ENCODE measurements at regions of chr1 and their contacts with region 1.

Region 1: DNA sequence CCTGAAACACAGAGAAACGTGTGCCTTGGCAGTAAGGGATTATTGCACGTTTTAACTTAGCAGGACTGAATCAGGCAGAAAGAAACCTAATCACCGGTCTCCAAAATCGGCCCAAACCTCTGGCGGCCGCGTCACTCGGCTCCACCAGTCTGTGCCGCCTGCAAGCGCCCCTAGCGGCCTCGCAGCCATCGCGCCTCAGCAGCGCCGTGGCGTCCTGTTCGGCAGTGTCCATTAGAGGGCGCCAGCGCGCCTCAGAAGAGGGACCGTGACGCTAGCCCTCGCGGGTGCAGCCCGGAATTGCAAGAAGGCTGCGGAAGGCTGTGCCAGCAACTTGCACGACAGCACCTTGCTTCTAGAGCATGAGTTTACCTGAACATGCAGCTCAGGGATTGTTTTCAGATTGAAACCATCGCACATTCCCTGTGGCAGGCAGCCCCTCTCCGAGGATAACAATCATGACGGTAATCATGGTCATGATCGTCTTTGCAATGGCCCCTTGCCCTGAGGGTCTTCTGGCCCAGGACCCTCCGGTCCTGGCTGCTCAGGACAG is 164.4 kb downstream of the TRIM33 start:
- DNase-seq: peak; percentile 94 to 99 (median 97)
- ATAC-seq: peak; percentile 98
- H3K4me3 ChIP-seq: peak overlapping the region; percentile 43 to 47
- H3K4me3 Mint-ChIP-seq: peak overlapping the region; percentile 92
- H3K27ac ChIP-seq: peak overlapping the region in 1 of 2 experiments; percentile 41
- H3K27ac Mint-ChIP-seq: peak overlapping the region; percentile 94
- H3K4me1 ChIP-seq: peaks cover 30% of the 10 kb centered on the region
- H3K4me1 Mint-ChIP-seq: peaks cover 33% of the 10 kb centered on the region
- H3K27me3 ChIP-seq: no peaks in the 10 kb centered on the region
- H3K27me3 Mint-ChIP-seq: no peaks in the 10 kb centered on the region
- CTCF ChIP-seq: peak; percentile 100

Region 2: DNA sequence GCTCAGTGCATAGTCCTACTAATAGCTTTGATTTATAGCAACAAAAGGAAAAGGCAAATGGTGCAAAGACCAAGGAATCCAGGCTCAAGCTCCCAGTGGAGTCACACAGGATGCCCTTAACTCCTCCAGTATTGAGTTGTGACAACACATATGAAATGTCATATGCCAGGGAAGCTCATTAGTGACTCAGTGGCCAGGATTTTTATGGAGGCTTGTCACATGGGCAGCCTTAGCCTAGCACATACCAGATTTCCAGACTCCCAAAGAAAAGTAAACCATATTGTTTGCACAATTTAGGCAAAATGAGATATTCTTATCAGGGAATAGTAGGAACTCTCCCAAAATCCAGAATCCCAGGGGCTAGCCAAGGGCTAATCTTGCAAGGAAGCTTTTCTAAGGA is 827.0 kb before region 1 on chr1:
- CTCF ChIA-PET with region 1: no interaction called
- POLR2A ChIA-PET with region 1: no interaction called
- intact Hi-C with region 1: no loop called
- DNase-seq: no peak
- ATAC-seq: no peak
- H3K4me3 ChIP-seq: no peak overlapping the region
- H3K4me3 Mint-ChIP-seq: no peak overlapping the region
- H3K27ac ChIP-seq: no peak overlapping the region
- H3K27ac Mint-ChIP-seq: no peak overlapping the region
- H3K4me1 ChIP-seq: no peaks in the 10 kb centered on the region
- H3K4me1 Mint-ChIP-seq: no peaks in the 10 kb centered on the region
- H3K27me3 ChIP-seq: no peaks in the 10 kb centered on the region
- H3K27me3 Mint-ChIP-seq: peaks cover 9% of the 10 kb centered on the region
- CTCF ChIP-seq: no peak

Region 3: DNA sequence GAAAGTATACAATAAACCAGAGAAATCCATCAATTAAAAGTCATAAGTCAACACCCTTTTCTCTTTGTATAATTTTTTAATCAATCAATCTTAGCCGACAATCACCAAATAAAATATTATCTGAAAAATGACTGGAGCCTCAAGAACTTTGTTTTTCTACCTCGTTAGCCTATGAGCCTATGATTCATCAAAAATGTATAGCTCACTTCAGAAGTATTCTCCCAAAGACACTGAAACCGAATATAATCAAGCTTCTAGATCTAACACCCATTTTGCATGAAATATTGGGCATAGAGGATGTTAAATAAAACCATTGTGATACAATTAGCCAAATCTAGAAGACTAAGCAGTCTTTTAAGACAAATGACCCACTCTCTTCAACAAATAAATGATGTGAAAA is 516.5 kb before region 1 on chr1:
- CTCF ChIA-PET with region 1: interaction called, 4 read pairs
- POLR2A ChIA-PET with region 1: no interaction called
- intact Hi-C with region 1: loop called in 1 of 2 experiments (anchors 5 kb)
- DNase-seq: no peak
- ATAC-seq: no peak
- H3K4me3 ChIP-seq: no peak overlapping the region
- H3K4me3 Mint-ChIP-seq: no peak overlapping the region
- H3K27ac ChIP-seq: no peak overlapping the region
- H3K27ac Mint-ChIP-seq: no peak overlapping the region
- H3K4me1 ChIP-seq: no peaks in the 10 kb centered on the region
- H3K4me1 Mint-ChIP-seq: no peaks in the 10 kb centered on the region
- H3K27me3 ChIP-seq: no peaks in the 10 kb centered on the region
- H3K27me3 Mint-ChIP-seq: no peaks in the 10 kb centered on the region
- CTCF ChIP-seq: no peak

Region 4: GRCh38 chr1:114330451-114330983 is 16.0 kb before region 1 on chr1:
- CTCF ChIA-PET with region 1: interaction called, 51 read pairs
- POLR2A ChIA-PET with region 1: interaction called, 37 read pairs
- intact Hi-C with region 1: loop called (anchors 1 to 2 kb)
- DNase-seq: peak in 7 of 9 experiments; percentile 23 to 72 (median 48)
- ATAC-seq: peak; percentile 80
- H3K4me3 ChIP-seq: no peak overlapping the region
- H3K4me3 Mint-ChIP-seq: peak overlapping the region; percentile 6
- H3K27ac ChIP-seq: no peak overlapping the region
- H3K27ac Mint-ChIP-seq: peak overlapping the region; percentile 85
- H3K4me1 ChIP-seq: peaks cover 65% of the 10 kb centered on the region
- H3K4me1 Mint-ChIP-seq: peaks cover 76% of the 10 kb centered on the region
- H3K27me3 ChIP-seq: no peaks in the 10 kb centered on the region
- H3K27me3 Mint-ChIP-seq: no peaks in the 10 kb centered on the region
- CTCF ChIP-seq: no peak

Region 5: DNA sequence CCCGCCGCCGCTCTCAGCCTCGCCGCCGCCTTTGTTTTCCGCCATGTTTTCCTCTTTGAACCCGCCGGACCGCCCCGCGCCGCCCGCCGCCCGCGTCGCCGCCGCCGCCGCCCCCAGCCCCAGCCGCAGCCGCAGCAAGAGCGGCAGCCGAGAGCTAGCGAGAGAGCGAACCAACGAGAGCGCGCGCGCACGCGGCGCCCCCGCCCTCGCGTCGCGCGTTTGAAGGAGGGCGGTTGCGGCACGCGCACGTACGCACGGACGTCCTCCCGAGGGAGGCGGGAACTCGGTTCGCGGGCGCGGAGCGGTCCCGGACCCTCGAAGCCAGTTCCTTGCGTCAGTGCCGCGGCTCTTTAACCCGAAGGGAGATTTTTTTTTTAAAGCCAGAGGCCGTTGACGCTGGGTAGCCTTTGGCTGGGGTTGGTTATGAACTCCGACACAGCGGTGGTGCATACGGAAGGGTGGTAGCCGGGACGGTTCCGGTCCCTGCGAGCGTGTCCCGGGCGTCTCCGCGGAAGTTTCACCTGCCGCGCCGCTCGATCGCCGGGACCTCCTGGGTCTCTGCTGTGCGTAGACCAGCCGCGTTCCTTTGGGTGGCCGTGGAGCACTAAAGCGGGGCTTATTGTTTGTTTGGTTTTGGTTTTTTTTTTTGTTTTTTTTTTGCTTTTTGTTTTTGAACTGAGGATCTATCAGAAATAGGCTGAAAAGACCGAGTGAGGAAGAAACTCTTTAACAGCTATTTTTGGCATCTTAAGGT is 164.7 kb after region 1 on chr1 and contains the start of gene TRIM33:
- CTCF ChIA-PET with region 1: interaction called, 3 read pairs
- POLR2A ChIA-PET with region 1: interaction called, 4 read pairs
- intact Hi-C with region 1: loop called (anchors 1 to 5 kb)
- DNase-seq: peak; percentile 84 to 98 (median 91)
- ATAC-seq: peak; percentile 80
- H3K4me3 ChIP-seq: peak within 1 kb of the TSS; percentile 78 to 96
- H3K4me3 Mint-ChIP-seq: peak within 1 kb of the TSS; percentile 96
- H3K27ac ChIP-seq: peak within 1 kb of the TSS; percentile 93 to 100
- H3K27ac Mint-ChIP-seq: peak within 1 kb of the TSS; percentile 99
- H3K4me1 ChIP-seq: peaks cover 40% of the 10 kb centered on the region
- H3K4me1 Mint-ChIP-seq: peaks cover 54% of the 10 kb centered on the region
- H3K27me3 ChIP-seq: no peaks in the 10 kb centered on the region
- H3K27me3 Mint-ChIP-seq: no peaks in the 10 kb centered on the region
- CTCF ChIP-seq: no peak
- total RNA-seq, gene TRIM33: 50.4 to 50.7 TPM

Region 6: DNA sequence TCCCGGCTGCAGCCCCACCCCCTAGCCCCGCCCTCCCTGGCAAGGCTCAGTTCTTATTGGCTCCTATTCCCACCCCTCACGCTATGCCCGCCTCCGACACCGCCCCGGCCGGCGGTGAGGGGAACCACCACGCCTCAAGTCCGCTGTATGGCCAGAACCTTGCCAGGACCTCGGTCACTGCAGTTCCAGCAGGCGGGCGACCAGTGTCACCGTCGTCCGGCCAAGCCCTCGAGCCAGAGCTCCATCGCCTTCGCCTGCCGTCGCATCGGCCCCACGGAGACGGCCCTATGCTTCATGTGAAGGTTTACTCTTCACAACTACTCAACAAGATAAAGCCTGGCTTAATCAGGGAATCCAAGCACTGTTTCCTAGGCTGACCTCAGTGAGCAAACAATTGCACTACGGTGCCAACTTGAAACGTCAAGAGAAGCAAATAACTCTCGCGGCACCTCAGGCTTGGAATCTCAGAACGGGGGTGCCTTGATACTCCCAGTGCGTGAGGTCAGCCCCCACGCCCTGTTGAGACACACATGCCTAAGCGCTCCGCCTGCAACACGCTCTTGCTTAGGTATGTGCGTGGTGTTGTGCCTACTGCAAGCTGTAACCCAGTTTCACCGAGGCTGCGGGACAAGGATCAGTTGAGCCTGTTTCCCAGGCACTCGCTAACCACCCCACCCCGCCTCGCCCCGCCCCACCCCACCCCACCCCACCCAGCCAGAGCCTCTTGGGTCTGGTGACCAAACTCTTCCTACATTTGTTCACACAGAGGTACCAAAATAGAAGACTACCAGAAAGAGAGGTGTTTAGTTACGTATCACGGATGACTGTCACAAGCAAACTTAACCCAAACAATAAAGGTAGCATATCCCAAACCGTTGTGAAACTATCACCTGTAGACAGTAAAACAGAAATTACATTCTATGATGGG is 323.8 kb after region 1 on chr1:
- CTCF ChIA-PET with region 1: interaction called, 8 read pairs
- POLR2A ChIA-PET with region 1: no interaction called
- intact Hi-C with region 1: loop called (anchors 1 to 2 kb)
- DNase-seq: peak in 8 of 9 experiments; percentile 2 to 90 (median 86)
- ATAC-seq: peak; percentile 96
- H3K4me3 ChIP-seq: peak overlapping the region; percentile 77 to 79
- H3K4me3 Mint-ChIP-seq: peak overlapping the region; percentile 98
- H3K27ac ChIP-seq: peak overlapping the region in 1 of 2 experiments; percentile 49
- H3K27ac Mint-ChIP-seq: peak overlapping the region; percentile 92
- H3K4me1 ChIP-seq: peaks cover 5% of the 10 kb centered on the region
- H3K4me1 Mint-ChIP-seq: peaks cover 14% of the 10 kb centered on the region
- H3K27me3 ChIP-seq: no peaks in the 10 kb centered on the region
- H3K27me3 Mint-ChIP-seq: peaks cover 11% of the 10 kb centered on the region
- CTCF ChIP-seq: no peak

Region 7: DNA sequence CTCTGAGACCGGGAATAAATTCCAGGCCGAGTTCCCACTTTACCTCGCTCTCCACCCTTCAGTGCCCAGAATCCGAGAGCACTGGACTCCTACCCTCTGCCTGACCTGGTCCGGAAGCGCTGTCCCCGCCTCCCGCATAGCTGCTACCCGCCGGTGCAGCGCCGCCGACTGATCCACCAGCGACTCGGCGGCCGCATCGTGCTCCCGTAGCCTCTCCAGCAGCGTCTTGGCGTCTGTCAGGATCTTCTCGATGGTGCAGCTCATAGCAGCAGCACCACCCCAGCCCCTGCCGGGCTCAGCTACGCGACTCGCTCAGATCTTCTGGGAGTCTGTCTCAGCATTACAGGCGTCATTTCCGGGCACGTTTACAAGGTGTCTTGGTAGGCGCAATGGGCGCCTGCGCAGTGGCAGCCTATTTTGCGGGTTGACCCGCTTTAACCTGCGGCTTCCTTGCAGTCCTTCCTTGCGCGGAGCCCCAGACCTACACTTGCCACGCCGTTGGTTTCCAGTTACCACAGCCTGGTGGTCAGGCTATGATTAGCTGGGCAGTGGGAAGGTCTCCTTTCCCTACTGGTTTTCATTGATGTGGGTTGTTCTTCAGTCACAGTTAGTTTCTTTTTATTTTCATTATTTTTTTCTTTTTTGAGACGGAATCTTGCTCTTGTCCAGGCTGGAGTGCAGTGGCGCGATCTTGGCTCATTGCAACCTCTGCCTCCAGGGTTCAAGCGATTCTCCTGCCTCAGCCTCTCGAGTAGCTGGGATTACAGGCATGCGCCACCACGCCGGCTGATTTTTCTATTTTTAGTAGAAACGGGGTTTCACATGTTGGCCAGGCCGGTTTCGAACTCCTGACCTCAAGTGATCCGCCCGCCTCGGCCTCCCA is 434.0 kb after region 1 on chr1 and contains the start of gene SIKE1:
- CTCF ChIA-PET with region 1: no interaction called
- POLR2A ChIA-PET with region 1: no interaction called
- intact Hi-C with region 1: loop called in 1 of 2 experiments (anchors 2 kb)
- DNase-seq: peak; percentile 87 to 98 (median 94)
- ATAC-seq: peak; percentile 97
- H3K4me3 ChIP-seq: peak within 1 kb of the TSS; percentile 86 to 92
- H3K4me3 Mint-ChIP-seq: peak within 1 kb of the TSS; percentile 100
- H3K27ac ChIP-seq: peak within 1 kb of the TSS; percentile 91 to 93
- H3K27ac Mint-ChIP-seq: peak within 1 kb of the TSS; percentile 99
- H3K4me1 ChIP-seq: peaks cover 15% of the 10 kb centered on the region
- H3K4me1 Mint-ChIP-seq: peaks cover 35% of the 10 kb centered on the region
- H3K27me3 ChIP-seq: no peaks in the 10 kb centered on the region
- H3K27me3 Mint-ChIP-seq: no peaks in the 10 kb centered on the region
- CTCF ChIP-seq: no peak
- total RNA-seq, gene SIKE1: 64.4 to 66.6 TPM

Region 8: GRCh38 chr1:115098979-115099692 is 752.6 kb after region 1 on chr1:
- CTCF ChIA-PET with region 1: interaction called, 3 read pairs
- POLR2A ChIA-PET with region 1: no interaction called
- intact Hi-C with region 1: loop called in 1 of 2 experiments (anchors 10 kb)
- DNase-seq: peak; percentile 55 to 96 (median 74)
- ATAC-seq: peak; percentile 89
- H3K4me3 ChIP-seq: peak overlapping the region; percentile 51 to 56
- H3K4me3 Mint-ChIP-seq: peak overlapping the region; percentile 86
- H3K27ac ChIP-seq: peak overlapping the region; percentile 95
- H3K27ac Mint-ChIP-seq: peak overlapping the region; percentile 97
- H3K4me1 ChIP-seq: peaks cover 27% of the 10 kb centered on the region
- H3K4me1 Mint-ChIP-seq: peaks cover 36% of the 10 kb centered on the region
- H3K27me3 ChIP-seq: no peaks in the 10 kb centered on the region
- H3K27me3 Mint-ChIP-seq: no peaks in the 10 kb centered on the region
- CTCF ChIP-seq: no peak